Left cardiac atrium (tissue), 4 donors: ENCODE measurements at regions of chr21 and their contacts with region 1.

Region 1: DNA sequence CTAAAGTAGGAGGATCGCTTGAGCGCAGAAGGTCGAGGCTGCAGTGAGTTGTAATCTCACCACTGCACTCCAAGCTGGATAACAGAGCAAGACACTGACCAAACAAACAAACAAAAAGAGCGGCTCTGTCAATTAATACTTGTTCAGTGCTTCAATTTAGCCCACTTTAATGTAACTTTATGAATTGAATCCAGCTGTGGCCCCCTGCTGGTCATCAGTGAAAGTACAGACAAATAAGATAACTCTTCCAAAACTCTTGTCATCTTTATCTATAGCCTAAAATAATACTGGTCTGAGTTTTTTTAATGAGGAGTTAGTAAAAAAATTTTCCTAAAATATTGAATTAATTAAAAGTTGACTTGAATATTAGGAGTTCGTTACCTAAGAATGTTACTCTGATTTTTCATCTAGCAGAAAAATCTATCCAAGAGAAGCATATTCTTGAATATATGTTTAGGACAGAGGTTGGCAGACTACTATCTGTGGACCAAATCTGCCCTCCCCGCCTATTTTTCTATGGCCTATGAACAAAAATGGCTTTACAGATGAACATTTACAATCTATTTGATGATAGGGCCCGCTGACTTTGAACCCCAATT is 26.1 kb downstream of the ATP5PF start:
- DNase-seq: peak; percentile 42
- ATAC-seq: no peak

Region 2: DNA sequence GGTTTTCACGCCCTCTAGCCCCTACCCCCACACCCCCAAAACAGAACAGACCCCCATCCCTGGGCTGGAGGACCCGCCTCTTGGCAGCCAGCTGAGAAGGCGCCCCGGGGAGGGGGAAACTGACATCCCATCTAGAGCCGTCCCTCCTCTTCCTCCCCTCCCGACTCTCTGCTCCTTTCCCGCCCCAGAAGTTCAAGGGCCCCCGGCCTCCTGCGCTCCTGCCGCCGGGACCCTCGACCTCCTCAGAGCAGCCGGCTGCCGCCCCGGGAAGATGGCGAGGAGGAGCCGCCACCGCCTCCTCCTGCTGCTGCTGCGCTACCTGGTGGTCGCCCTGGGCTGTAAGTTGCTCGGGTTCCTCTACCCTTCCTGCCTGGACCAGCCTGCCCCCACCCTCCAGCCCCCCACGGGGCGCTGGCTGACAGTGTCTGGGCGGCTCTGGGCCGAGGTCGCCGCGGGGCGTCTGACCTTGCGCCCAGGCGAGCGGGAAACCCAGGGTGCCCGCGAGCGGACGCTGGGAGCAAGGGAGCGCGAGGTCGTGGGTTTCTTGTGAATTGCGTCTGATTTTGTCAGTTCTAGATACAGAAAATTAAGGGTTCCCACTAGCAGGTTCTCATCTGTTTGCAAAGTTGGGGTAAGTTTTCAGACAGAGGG is 68.9 kb before region 1 on chr21:
- intact Hi-C with region 1: loop called in 1 of 2 experiments (anchors 10 kb)
- DNase-seq: peak; percentile 61
- ATAC-seq: peak; percentile 83 to 90